T-cell (primary cell): ENCODE measurements at regions of chr9 and their contacts with region 1.

Region 1: DNA sequence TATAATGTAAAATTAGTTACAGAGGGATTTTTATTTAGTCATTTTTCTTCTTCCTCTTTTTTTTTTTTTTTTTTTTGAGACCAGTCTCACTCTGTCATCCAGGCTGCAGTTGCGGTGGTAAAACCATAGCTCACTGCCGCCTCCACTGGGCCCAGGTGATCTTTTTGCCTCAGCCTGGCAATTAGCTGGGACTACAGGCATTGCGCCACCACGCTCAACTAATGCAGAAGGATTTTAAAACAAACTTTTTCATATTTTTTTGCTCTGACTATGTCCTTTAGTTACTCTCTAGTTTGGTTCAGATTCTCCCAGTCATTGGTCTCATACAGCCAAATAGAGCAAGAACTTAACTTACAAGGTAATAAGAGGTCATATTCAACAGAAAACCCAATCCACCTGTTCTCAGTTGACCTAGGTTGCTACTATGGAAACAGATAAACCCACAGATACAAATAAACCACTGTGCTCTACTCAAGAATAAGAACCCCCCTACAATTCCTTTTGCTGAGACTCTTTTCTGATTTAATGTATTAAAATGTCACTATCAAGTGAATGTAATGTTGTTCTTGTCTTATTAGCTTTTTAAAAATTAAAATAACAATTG is 50.1 kb upstream of the TTC39B start:
- DNase-seq: peak in 29 of 35 experiments; percentile 3 to 64 (median 21)
- ATAC-seq: peak; percentile 69 to 91 (median 78)
- H3K4me3 ChIP-seq: no peak overlapping the region
- H3K4me3 Mint-ChIP-seq: no peak overlapping the region
- H3K27ac ChIP-seq: no peak overlapping the region
- H3K27ac Mint-ChIP-seq: no peak overlapping the region
- H3K4me1 ChIP-seq: peaks cover 7 to 14% of the 10 kb centered on the region in 2 experiments
- H3K4me1 Mint-ChIP-seq: peaks cover 20 to 33% (median 32%) of the 10 kb centered on the region in 3 donors
- H3K27me3 ChIP-seq: no peaks in the 10 kb centered on the region
- H3K27me3 Mint-ChIP-seq: no peaks in the 10 kb centered on the region

Region 2: GRCh38 chr9:15249042-15249818 is 107.9 kb before region 1 on chr9:
- CTCF ChIA-PET with region 1: no interaction called
- POLR2A ChIA-PET with region 1: no interaction called
- DNase-seq: no peak
- ATAC-seq: no peak
- H3K4me3 ChIP-seq: no peak overlapping the region
- H3K4me3 Mint-ChIP-seq: no peak overlapping the region
- H3K27ac ChIP-seq: no peak overlapping the region
- H3K27ac Mint-ChIP-seq: no peak overlapping the region
- H3K4me1 ChIP-seq: peaks cover 0 to 3% of the 10 kb centered on the region in 2 experiments
- H3K4me1 Mint-ChIP-seq: peaks cover 64 to 77% (median 74%) of the 10 kb centered on the region in 3 donors
- H3K27me3 ChIP-seq: no peaks in the 10 kb centered on the region
- H3K27me3 Mint-ChIP-seq: no peaks in the 10 kb centered on the region

Region 3: GRCh38 chr9:15277400-15278090 is 79.6 kb before region 1 on chr9:
- CTCF ChIA-PET with region 1: interaction called, 3 to 10 read pairs
- POLR2A ChIA-PET with region 1: no interaction called
- DNase-seq: peak in 1 of 35 experiments; percentile 59
- ATAC-seq: peak in 2 of 4 experiments; percentile 33 to 42
- H3K4me3 ChIP-seq: no peak overlapping the region
- H3K4me3 Mint-ChIP-seq: no peak overlapping the region
- H3K27ac ChIP-seq: no peak overlapping the region
- H3K27ac Mint-ChIP-seq: no peak overlapping the region
- H3K4me1 ChIP-seq: peaks cover 3 to 7% of the 10 kb centered on the region in 2 experiments
- H3K4me1 Mint-ChIP-seq: peaks cover 46 to 63% (median 55%) of the 10 kb centered on the region in 3 donors
- H3K27me3 ChIP-seq: no peaks in the 10 kb centered on the region
- H3K27me3 Mint-ChIP-seq: no peaks in the 10 kb centered on the region

Region 4: GRCh38 chr9:15370466-15371447 is 13.6 kb after region 1 on chr9:
- CTCF ChIA-PET with region 1: interaction called in 1 of 2 experiments, 5 read pairs
- POLR2A ChIA-PET with region 1: interaction called in 1 of 2 experiments, 11 read pairs
- DNase-seq: no peak
- ATAC-seq: no peak
- H3K4me3 ChIP-seq: no peak overlapping the region
- H3K4me3 Mint-ChIP-seq: no peak overlapping the region
- H3K27ac ChIP-seq: no peak overlapping the region
- H3K27ac Mint-ChIP-seq: no peak overlapping the region
- H3K4me1 ChIP-seq: no peaks in the 10 kb centered on the region
- H3K4me1 Mint-ChIP-seq: no peaks in the 10 kb centered on the region
- H3K27me3 ChIP-seq: peaks cover 0 to 12% of the 10 kb centered on the region in 2 experiments
- H3K27me3 Mint-ChIP-seq: peaks cover 0 to 6% of the 10 kb centered on the region in 2 donors

Region 5: GRCh38 chr9:15469406-15469805 is 112.3 kb after region 1 on chr9:
- CTCF ChIA-PET with region 1: no interaction called
- POLR2A ChIA-PET with region 1: interaction called in 1 of 2 experiments, 10 read pairs
- DNase-seq: no peak
- ATAC-seq: no peak
- H3K4me3 ChIP-seq: no peak overlapping the region
- H3K4me3 Mint-ChIP-seq: no peak overlapping the region
- H3K27ac ChIP-seq: no peak overlapping the region
- H3K27ac Mint-ChIP-seq: peak overlapping the region in 1 of 2 donors; percentile 46
- H3K4me1 ChIP-seq: no peaks in the 10 kb centered on the region
- H3K4me1 Mint-ChIP-seq: peaks cover 7 to 19% (median 10%) of the 10 kb centered on the region in 3 donors
- H3K27me3 ChIP-seq: no peaks in the 10 kb centered on the region
- H3K27me3 Mint-ChIP-seq: no peaks in the 10 kb centered on the region